ENCODE measurements at regions of chr7 and their contacts with region 1.

Region 1: DNA sequence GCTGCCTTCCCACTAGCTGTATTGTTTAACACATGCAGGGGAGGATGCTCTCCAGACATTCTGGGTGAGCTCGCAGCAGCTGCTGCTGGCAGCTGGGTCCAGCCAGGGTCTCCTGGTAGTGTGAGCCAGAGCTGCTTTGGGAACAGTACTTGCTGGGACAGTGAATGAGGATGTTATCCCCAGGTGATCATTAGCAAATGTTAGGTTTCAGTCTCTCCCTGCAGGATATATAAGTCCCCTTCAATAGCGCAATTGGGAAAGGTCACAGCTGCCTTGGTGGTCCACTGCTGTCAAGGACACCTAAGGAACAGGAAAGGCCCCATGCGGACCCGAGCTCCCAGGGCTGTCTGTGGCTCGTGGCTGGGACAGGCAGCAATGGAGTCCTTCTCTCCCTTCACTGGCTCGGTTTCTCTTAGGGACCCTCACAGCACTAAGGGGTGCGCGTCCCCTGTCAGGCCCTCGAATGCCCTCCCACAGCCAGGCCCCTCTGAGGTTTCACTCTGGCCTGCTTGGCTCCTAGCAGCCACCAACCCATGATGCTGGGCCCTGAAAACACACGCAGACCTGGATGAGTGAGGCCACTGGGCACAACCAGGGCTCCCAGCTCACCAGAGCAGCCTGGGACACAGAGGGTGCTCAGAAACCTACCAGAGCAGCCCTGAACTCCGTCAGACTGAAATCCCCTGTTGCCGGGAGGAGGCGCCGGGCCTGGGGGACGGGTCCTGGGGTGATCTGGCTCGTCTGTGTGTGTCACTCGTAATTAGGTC is 173.0 kb upstream of the LANCL2 start:
- DNase-seq: no peak
- H3K4me3 ChIP-seq: no peak overlapping the region
- H3K27ac ChIP-seq: no peak overlapping the region
- H3K4me1 ChIP-seq: no peaks in the 10 kb centered on the region
- H3K27me3 ChIP-seq: no peaks in the 10 kb centered on the region
- CTCF ChIP-seq: no peak

Region 2: GRCh38 chr7:54778696-54779540 is 413.2 kb before region 1 on chr7:
- CTCF ChIA-PET with region 1: interaction called, 13 read pairs
- POLR2A ChIA-PET with region 1: no interaction called
- intact Hi-C with region 1: loop called (anchors 5 kb)
- DNase-seq: no peak
- H3K4me3 ChIP-seq: no peak overlapping the region
- H3K27ac ChIP-seq: no peak overlapping the region
- H3K4me1 ChIP-seq: peaks cover 1% of the 10 kb centered on the region; the same call in 1 of the 2 replicates
- H3K27me3 ChIP-seq: no peaks in the 10 kb centered on the region
- CTCF ChIP-seq: no peak

Measured in PC-9 (cell line).